PC-9 (cell line): ENCODE measurements at regions of chr1 and their contacts with region 1.

Region 1: DNA sequence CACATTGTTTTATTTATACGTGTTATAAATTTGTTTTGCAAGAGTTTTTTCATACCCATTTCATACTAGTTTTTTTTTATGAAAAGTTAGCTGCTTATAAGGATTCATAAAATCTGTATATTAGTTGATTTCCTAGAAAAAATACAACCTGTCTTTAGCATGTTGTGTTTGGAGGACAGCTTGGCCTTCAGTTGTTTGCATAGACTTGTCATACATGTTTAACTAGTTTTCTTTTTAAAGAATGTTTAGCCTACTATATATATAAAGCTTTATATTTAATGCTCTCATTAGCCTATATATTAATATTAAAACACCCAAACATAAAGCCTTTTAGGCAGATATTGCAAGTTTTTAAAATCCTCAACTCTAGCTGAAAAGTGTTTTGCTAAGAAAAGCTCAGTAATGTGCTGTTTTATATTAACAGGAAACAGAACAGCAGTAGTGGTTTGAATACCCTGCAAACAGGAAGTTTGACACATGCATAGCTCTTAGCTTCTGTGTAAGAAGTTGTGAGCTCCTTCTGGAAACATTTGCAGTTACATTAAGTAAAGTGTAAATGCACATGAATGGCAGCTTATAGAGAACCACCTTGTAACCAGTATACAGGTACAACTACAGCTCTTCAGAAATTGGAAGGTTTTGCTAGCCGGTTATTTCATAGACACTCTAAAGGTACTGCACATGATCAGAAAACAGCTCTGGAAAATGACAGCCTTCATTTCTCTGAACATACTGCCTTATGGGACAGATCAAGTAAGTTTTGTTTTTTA is at the start of gene PRKACB:
- DNase-seq: no peak
- H3K4me3 ChIP-seq: no peak within 1 kb of the TSS
- H3K27ac ChIP-seq: no peak within 1 kb of the TSS
- H3K4me1 ChIP-seq: peaks cover 7% of the 10 kb centered on the region; the same call in 1 of the 2 replicates
- H3K27me3 ChIP-seq: no peaks in the 10 kb centered on the region
- CTCF ChIP-seq: no peak
- total RNA-seq, gene PRKACB: 16.1 and 16.7 TPM in 2 replicates

Region 2: DNA sequence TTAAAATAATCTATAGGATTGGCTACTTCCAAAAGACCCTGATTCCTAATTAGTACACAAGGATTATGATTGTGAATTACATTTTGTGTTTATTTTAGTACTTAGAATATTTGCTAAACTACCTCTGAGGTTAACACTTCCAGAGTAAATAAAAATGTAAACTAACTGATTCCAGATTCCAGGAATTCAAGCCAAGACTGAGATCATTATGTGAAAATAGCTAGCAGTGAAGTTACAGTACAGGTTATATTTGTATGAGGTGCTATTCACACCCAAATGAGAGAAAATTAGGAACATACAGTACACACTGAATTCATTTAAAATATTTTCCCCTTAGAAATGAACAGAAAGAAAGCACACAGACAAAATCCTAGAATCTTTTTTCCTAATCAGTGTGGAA is 173.9 kb before region 1 on chr1:
- CTCF ChIA-PET with region 1: no interaction called
- POLR2A ChIA-PET with region 1: no interaction called
- intact Hi-C with region 1: no loop called
- DNase-seq: no peak
- H3K4me3 ChIP-seq: no peak overlapping the region
- H3K27ac ChIP-seq: no peak overlapping the region
- H3K4me1 ChIP-seq: no peaks in the 10 kb centered on the region
- H3K27me3 ChIP-seq: no peaks in the 10 kb centered on the region
- CTCF ChIP-seq: no peak

Region 3: DNA sequence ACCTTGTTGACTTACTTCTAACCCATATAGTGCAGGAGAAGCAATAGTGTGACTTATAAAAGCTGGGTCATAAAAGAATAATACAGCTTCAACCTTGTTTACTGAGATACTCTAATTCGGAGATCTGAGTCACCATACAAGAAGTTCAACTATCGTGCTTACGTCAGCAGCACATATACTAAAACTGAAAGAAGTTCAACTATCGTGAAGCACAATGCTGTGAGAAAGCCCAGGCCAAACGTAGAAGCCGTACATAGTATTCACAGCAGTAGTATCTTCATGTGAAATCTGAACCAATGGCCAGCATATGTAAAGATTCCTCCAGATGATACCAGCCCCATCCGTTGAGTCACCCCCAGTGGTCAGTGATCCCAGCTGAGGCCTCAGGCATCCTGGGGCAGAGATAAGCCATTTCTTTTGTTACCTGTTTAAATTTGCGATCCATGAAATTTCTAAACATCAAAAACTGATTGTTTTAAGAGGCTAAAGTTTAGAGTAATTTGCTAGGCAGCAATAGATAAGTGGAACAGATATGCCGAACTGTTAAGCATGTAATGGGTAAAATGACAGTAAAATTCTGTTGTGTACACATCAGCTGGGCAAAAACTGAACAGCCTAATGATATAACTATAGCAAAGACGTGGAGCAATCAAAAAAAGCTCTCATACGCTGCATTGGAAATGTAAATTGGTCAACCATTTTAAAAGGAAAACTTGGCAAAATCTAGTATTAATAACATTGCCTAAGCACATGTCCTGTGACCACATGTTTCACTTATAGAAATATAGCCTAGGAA is 103.6 kb after region 1 on chr1:
- CTCF ChIA-PET with region 1: no interaction called
- POLR2A ChIA-PET with region 1: no interaction called
- intact Hi-C with region 1: loop called (anchors 2 kb)
- DNase-seq: peak; percentile 58 to 96
- H3K4me3 ChIP-seq: peak overlapping the region; percentile 40; the same call in 1 of the 2 replicates
- H3K27ac ChIP-seq: peak overlapping the region; percentile 73
- H3K4me1 ChIP-seq: peaks cover 25% of the 10 kb centered on the region
- H3K27me3 ChIP-seq: no peaks in the 10 kb centered on the region
- CTCF ChIP-seq: no peak

Region 4: DNA sequence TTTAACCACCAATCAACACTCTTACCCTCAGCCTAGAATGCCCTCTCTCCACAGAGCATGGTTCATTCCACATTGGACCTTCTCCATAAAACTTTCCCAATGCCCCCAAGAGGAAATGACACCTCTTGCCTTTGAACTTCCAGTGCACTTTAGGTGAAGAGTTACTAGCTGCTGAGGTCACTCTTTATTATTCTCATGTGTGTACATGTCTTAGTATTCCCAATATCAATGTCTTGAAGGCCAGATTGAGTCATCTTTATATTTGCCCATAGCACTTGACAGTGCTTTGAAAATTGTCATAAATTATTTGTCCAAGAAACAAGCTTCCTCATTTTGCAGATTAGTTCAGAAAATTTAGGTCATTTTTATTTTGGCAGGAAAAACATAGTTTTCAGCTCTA is 246.2 kb after region 1 on chr1:
- CTCF ChIA-PET with region 1: no interaction called
- POLR2A ChIA-PET with region 1: interaction called, 16 read pairs
- intact Hi-C with region 1: no loop called
- DNase-seq: no peak
- H3K4me3 ChIP-seq: no peak overlapping the region
- H3K27ac ChIP-seq: no peak overlapping the region
- H3K4me1 ChIP-seq: peaks cover 15% of the 10 kb centered on the region
- H3K27me3 ChIP-seq: no peaks in the 10 kb centered on the region
- CTCF ChIP-seq: no peak

Region 5: GRCh38 chr1:84603941-84604830 is 460.2 kb after region 1 on chr1:
- CTCF ChIA-PET with region 1: interaction called, 3 read pairs
- POLR2A ChIA-PET with region 1: no interaction called
- intact Hi-C with region 1: loop called (anchors 1 kb)
- DNase-seq: peak; percentile 74 to 97
- H3K4me3 ChIP-seq: peak overlapping the region; percentile 52
- H3K27ac ChIP-seq: peak overlapping the region; percentile 60
- H3K4me1 ChIP-seq: peaks cover 36% of the 10 kb centered on the region
- H3K27me3 ChIP-seq: no peaks in the 10 kb centered on the region
- CTCF ChIP-seq: peak; percentile 92

Region 6: DNA sequence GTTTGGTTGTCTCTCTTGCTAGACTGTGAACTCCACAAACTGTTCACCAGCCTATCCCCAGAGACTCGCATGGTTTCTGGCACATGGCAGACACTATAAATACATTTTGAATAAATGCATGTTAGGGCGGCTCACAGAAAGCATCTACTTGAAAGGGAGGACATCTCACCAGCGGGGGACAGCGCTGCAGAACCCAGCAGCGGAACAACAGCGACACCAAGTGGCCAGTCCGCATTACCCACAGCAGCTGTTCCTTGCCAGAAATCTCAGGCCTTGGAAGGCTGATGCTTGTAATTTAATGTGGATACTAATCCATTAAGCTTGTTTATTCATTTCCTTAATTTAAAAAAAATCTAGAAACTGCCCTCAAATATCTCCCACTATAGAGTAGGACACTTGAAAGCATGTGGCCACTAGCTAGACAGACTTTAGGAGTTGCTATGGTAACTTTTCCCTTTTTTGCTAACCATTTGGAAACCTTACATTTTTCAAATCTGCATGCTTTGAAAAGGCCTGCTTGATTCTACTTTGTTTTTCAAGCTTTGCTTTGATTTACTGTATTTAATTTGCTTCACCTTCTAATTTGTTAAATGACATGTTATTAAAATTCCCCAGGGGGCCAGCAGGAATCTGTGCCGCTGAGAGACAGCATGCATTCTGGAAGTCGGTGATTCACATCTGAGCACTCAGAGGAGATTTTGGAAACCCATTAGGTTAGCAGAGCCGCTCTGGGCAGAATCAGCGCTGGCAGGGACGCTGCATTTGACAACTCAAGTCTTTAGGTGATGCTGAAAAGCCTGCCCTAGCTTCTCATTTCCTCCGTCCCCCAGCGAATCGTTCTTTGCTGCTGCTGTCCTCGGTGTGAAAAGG is 609.8 kb after region 1 on chr1:
- CTCF ChIA-PET with region 1: no interaction called
- POLR2A ChIA-PET with region 1: no interaction called
- intact Hi-C with region 1: loop called (anchors 5 kb)
- DNase-seq: peak; percentile 62 to 66
- H3K4me3 ChIP-seq: no peak overlapping the region
- H3K27ac ChIP-seq: no peak overlapping the region
- H3K4me1 ChIP-seq: no peaks in the 10 kb centered on the region
- H3K27me3 ChIP-seq: no peaks in the 10 kb centered on the region
- CTCF ChIP-seq: peak; percentile 99